ENCODE measurements at regions of chr14 and their contacts with region 1.

Region 1: DNA sequence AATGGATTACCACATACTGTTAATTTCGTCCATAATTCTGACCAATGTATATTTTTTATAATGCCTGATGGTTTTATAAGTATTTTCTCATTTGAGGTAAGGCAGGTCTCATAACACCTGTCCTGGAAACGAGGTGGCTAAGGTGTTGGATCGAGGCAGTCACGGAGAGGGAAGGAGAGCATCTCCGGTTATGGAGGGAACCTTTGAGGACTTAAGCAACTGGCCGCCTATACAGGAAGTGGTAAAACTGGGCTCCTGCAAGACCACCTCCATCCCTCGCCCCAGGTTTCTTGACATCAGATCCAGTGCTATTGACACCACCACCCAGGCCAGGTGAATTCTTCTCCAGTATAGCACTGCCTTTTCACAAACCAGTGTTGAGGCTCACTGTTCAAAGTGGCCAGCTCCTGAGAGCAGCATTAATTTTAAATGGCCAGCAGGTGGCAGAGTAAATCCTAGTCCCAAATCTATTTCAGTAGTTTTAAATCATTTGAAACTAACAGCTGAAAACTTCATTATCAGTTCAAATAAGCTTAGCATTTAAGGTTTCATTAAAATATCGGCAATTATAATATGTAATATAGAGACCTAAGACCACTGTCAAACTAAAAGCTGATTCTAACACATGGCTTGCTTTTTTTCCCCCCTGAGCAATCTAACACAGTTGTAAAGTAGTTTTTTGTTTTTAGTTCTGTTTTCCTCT is 100.8 kb downstream of the PPM1A start:
- DNase-seq: no peak
- H3K4me3 ChIP-seq: no peak overlapping the region
- H3K27ac ChIP-seq: no peak overlapping the region
- H3K4me1 ChIP-seq: peaks cover 5% of the 10 kb centered on the region
- H3K27me3 ChIP-seq: no peaks in the 10 kb centered on the region
- CTCF ChIP-seq: peak; percentile 36 to 56 (median 50)
- POLR2A ChIP-seq: no peak

Region 2: GRCh38 chr14:60288279-60288678 is 61.5 kb before region 1 on chr14:
- intact Hi-C with region 1: no loop called
- DNase-seq: no peak
- H3K4me3 ChIP-seq: no peak overlapping the region
- H3K27ac ChIP-seq: no peak overlapping the region
- H3K4me1 ChIP-seq: no peaks in the 10 kb centered on the region
- H3K27me3 ChIP-seq: no peaks in the 10 kb centered on the region
- CTCF ChIP-seq: no peak
- POLR2A ChIP-seq: no peak

Region 3: GRCh38 chr14:60553808-60554207 is 204.0 kb after region 1 on chr14:
- intact Hi-C with region 1: loop called (anchors 10 kb)
- DNase-seq: no peak
- H3K4me3 ChIP-seq: no peak overlapping the region
- H3K27ac ChIP-seq: no peak overlapping the region
- H3K4me1 ChIP-seq: no peaks in the 10 kb centered on the region
- H3K27me3 ChIP-seq: no peaks in the 10 kb centered on the region
- CTCF ChIP-seq: no peak
- POLR2A ChIP-seq: no peak